ENCODE measurements at regions of chr1 and their contacts with region 1.

Region 1: DNA sequence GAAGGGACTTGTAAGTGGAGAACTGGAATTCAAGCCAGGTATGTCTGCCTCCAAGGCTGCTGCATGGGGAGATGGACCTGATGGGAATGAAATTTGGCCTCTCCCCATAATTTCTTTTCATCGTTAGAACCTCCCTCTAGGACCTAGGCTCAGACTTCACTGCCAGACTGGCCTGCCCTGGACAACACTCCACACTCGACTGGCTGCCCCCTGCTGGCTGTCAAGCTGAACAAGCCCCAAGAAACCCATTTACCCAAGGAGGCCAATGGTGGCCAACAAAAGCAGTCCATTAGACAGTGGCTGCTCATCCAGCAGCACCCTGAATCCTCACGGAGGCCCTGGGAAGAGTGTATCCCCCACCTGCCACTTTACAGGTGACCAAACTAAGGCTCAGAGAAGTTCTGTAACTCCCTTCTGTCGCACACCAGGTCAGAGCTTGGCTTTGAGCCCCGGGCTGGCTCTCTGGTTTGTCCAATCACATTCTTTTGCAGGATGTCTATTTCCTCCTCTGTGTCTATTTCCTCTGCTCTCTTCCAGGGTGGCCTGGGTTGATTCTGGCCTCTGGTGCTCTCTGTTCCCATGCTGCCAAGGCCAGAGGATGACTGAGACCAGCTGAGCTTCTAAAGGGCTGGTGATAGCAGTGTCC is 3.8 kb downstream of the RNF186 start:
- DNase-seq: no peak
- H3K4me3 ChIP-seq: no peak overlapping the region
- H3K27ac ChIP-seq: no peak overlapping the region
- H3K4me1 ChIP-seq: no peaks in the 10 kb centered on the region
- H3K27me3 ChIP-seq: no peaks in the 10 kb centered on the region
- CTCF ChIP-seq: peak; percentile 63 to 68

Region 2: GRCh38 chr1:19661721-19662228 is 149.6 kb before region 1 on chr1:
- CTCF ChIA-PET with region 1: no interaction called
- dilution Hi-C with region 1: no loop called
- in situ Hi-C with region 1: no loop called
- intact Hi-C with region 1: loop called (anchors 2 kb)
- DNase-seq: no peak
- H3K4me3 ChIP-seq: no peak overlapping the region
- H3K27ac ChIP-seq: no peak overlapping the region
- H3K4me1 ChIP-seq: peaks cover 33% of the 10 kb centered on the region
- H3K27me3 ChIP-seq: peaks cover 19% of the 10 kb centered on the region
- CTCF ChIP-seq: peak; percentile 65 to 68

Region 3: DNA sequence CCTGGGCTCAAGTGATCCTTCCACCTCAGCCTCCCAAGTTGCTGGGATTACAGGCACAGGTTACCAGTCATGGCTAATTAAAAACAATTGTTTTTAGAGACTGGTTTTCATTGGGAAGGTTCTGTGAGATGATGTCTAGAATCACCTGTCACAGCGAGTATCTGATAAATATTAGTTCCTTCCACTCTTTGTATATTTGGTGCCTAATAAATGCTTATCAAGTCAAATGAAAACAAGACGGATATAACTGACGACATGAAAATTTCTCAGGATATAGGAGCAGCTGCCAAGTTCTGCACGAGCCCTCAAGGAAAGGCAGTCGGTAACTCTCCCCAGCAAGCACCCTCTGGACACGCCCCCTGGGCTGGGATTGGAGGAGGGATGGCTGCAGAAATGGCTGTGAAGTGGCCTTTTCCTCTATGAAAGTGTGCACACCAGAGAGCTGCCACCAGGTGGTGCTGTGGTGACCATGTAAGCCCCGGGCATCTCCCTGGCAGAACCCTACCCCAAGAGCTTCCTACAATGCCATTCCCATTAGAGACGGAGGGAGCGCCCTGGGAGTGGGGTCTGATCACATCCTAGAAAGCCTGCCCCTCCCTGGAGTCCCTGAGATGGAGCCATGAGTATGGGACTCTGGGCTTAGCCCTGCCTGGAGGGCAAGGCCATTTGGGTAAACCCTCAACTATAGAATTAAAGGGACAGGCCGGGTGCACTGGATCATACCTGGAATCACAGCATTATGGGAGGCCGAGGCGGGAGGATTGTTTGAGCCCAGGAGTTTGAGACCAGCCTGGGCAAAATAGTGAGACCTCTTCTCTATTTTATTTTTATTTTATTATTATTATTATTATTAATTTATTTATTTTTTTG is 95.8 kb before region 1 on chr1:
- CTCF ChIA-PET with region 1: interaction called, 3 read pairs
- dilution Hi-C with region 1: no loop called
- in situ Hi-C with region 1: no loop called
- intact Hi-C with region 1: loop called (anchors 1 kb)
- DNase-seq: peak; percentile 85
- H3K4me3 ChIP-seq: no peak overlapping the region
- H3K27ac ChIP-seq: no peak overlapping the region
- H3K4me1 ChIP-seq: no peaks in the 10 kb centered on the region
- H3K27me3 ChIP-seq: no peaks in the 10 kb centered on the region
- CTCF ChIP-seq: peak; percentile 84 to 95

Region 4: DNA sequence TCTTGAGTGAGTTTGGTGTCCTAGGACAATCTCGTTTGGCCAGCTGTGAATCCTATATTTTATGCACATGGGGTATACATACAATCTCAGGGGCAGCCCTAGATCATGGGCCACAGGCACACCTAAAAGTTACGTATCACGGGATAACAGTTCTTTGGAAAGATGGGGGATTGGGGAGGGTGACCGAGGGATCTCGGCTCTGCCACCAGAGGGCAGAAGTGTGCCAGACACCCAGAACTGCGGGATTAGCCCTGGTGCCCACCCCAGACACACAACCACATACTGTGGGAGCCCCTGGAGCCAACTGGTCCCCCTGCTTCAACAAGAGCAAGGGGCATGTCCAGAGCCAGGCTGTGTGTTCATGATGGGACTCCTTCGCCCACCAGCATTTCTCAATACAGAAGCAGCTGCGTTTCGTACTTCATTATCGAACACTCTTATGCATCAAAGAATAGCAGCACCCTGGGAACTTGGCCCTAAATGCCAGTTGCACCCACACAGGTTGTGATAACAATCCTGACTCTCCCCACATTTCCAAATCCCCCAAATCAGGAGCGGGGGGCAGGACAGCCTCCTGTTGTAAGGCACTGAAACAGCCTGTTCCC is 49.1 kb before region 1 on chr1:
- CTCF ChIA-PET with region 1: interaction called, 3 read pairs
- dilution Hi-C with region 1: no loop called
- in situ Hi-C with region 1: no loop called
- intact Hi-C with region 1: loop called (anchors 1 kb)
- DNase-seq: no peak
- H3K4me3 ChIP-seq: no peak overlapping the region
- H3K27ac ChIP-seq: no peak overlapping the region
- H3K4me1 ChIP-seq: peaks cover 22% of the 10 kb centered on the region
- H3K27me3 ChIP-seq: no peaks in the 10 kb centered on the region
- CTCF ChIP-seq: peak; percentile 72 to 90

Region 5: GRCh38 chr1:19852036-19852435 is 40.7 kb after region 1 on chr1:
- CTCF ChIA-PET with region 1: no interaction called
- dilution Hi-C with region 1: loop called (anchors 5 kb)
- in situ Hi-C with region 1: no loop called
- intact Hi-C with region 1: no loop called
- DNase-seq: no peak
- H3K4me3 ChIP-seq: no peak overlapping the region
- H3K27ac ChIP-seq: no peak overlapping the region
- H3K4me1 ChIP-seq: no peaks in the 10 kb centered on the region
- H3K27me3 ChIP-seq: no peaks in the 10 kb centered on the region
- CTCF ChIP-seq: no peak